HepG2 (cell line): ENCODE measurements at regions of chr4 and their contacts with region 1.

Region 1: DNA sequence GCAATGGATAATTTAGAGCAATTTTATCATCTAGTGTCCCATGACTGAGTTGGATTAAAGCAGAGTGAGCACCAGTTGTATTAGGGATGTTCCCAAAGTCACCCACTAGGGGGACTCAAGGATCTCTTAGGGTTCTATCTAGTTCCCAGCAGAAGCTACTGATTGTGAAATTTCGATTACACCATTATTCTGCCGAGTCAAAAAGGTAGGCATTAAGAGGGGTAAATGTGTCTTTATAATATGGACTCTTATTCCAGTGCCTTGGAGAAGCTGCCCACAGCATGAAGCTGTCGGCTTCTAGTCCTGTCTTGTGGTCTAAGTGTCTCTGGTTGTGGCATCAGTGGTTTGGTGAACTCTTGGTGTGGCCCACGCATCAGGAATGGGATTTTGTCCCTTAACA is 53.3 kb downstream of the RGS12 start:
- DNase-seq: peak; percentile 81
- ATAC-seq: peak; percentile 93
- H3K4me3 ChIP-seq: no peak overlapping the region
- H3K27ac ChIP-seq: no peak overlapping the region
- H3K4me1 ChIP-seq: peaks cover 25% of the 10 kb centered on the region
- H3K27me3 ChIP-seq: no peaks in the 10 kb centered on the region
- CTCF ChIP-seq: peak; percentile 83
- EP300 ChIP-seq: no peak
- POLR2A ChIP-seq: no peak
- RAD21 ChIP-seq: peak; percentile 89

Region 2: DNA sequence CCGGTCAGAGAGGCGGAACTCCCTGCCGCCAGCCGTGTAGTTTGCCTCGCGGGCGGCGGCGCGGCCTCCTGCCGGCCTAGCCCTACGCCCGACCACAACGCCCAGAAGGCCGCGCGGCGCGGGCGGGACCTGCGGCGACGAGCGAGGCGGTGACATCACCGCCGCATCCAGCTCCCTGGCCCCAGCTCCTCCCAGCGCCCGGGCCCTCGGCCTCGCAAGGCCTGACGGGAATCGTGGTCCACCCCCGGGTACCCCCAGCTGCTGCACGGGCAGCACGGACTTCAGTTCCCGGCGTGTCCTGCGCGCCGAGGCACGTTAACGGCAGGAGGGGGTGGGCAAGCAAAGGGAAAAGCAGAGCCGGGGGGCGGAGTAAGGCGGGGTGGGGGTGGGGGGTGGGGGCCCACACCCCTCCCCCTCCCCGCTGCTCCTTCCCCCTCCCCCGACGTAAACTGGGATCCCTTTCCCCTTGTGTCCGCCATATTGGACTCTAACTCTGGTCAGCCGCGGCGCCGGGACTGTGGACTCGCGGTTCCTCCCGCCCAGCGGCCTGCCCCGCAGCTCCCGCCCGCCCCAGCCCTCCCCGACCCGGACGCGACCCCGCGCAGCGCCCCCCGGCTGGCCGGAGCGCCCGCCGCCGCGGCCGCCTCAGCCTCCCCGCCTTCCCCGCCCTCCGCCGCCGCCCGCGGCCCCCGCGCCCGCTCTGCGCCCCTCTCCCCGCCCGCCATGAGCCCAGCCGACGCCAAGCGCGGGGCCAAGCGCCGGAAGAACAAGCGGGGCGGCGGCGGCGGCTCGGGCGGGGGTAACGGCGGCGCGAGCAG is 809.7 kb before region 1 on chr4 and contains the start of gene FAM193A:
- CTCF ChIA-PET with region 1: no interaction called
- POLR2A ChIA-PET with region 1: no interaction called
- in situ Hi-C with region 1: no loop called
- intact Hi-C with region 1: no loop called
- DNase-seq: peak; percentile 96
- ATAC-seq: peak; percentile 90
- H3K4me3 ChIP-seq: peak within 1 kb of the TSS; percentile 89 to 92 (median 91)
- H3K27ac ChIP-seq: peak within 1 kb of the TSS; percentile 86
- H3K4me1 ChIP-seq: peaks cover 20% of the 10 kb centered on the region
- H3K27me3 ChIP-seq: no peaks in the 10 kb centered on the region; a peak in 1 of 5 replicates
- CTCF ChIP-seq: no peak
- EP300 ChIP-seq: peak in 1 of 2 experiments; percentile 47; a peak in 1 of 4 replicates
- POLR2A ChIP-seq: peak; percentile 42 to 68; a peak in 3 of 4 replicates
- RAD21 ChIP-seq: no peak
- total RNA-seq, gene FAM193A: 7.2 and 8.7 TPM in 2 replicates

Region 3: GRCh38 chr4:3408793-3409330 is 62.7 kb after region 1 on chr4:
- CTCF ChIA-PET with region 1: interaction called, 3 read pairs
- POLR2A ChIA-PET with region 1: interaction called, 3 read pairs
- in situ Hi-C with region 1: no loop called
- intact Hi-C with region 1: loop called (anchors 2 kb)
- DNase-seq: no peak
- ATAC-seq: peak; percentile 26
- H3K4me3 ChIP-seq: no peak overlapping the region
- H3K27ac ChIP-seq: peak overlapping the region; percentile 96
- H3K4me1 ChIP-seq: peaks cover 50% of the 10 kb centered on the region
- H3K27me3 ChIP-seq: no peaks in the 10 kb centered on the region
- CTCF ChIP-seq: no peak
- EP300 ChIP-seq: no peak
- POLR2A ChIP-seq: no peak
- RAD21 ChIP-seq: no peak

Region 4: DNA sequence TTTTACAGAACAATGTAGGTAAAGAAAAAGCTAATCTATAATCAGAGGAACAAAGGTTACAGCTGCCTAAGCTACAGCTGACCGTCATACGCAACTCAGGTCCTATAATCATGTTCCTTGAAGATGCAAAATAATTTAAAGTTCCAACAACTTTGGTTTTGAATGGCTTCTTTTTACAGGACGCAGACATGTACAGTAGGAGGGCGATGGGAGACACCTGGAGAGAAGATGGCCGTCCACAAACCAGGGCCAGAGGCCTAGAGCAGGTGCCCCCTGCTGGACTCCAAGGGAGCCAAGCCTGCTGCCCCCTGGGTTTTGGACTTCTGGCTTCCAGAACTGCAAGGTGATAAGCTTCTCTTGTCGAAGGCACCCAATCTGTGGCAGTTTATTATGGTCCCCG is 106.2 kb after region 1 on chr4:
- CTCF ChIA-PET with region 1: interaction called, 9 read pairs
- POLR2A ChIA-PET with region 1: interaction called, 3 read pairs
- in situ Hi-C with region 1: loop called (anchors 5 kb)
- intact Hi-C with region 1: no loop called
- DNase-seq: peak; percentile 74
- ATAC-seq: peak; percentile 94
- H3K4me3 ChIP-seq: peak overlapping the region; percentile 7 to 34 (median 30); a peak in 3 of 6 replicates
- H3K27ac ChIP-seq: no peak overlapping the region
- H3K4me1 ChIP-seq: peaks cover 27% of the 10 kb centered on the region
- H3K27me3 ChIP-seq: peaks cover 0 to 2% of the 10 kb centered on the region in 2 experiments; a peak in 1 of 5 replicates
- CTCF ChIP-seq: peak; percentile 84
- EP300 ChIP-seq: no peak
- POLR2A ChIP-seq: no peak
- RAD21 ChIP-seq: peak; percentile 59

Region 5: GRCh38 chr4:4859390-4859842 is 1513.3 kb after region 1 on chr4 and contains the start of gene MSX1:
- CTCF ChIA-PET with region 1: no interaction called
- POLR2A ChIA-PET with region 1: no interaction called
- in situ Hi-C with region 1: no loop called
- intact Hi-C with region 1: no loop called
- DNase-seq: peak; percentile 81
- ATAC-seq: peak; percentile 94
- H3K4me3 ChIP-seq: peak within 1 kb of the TSS; percentile 86 to 98 (median 97)
- H3K27ac ChIP-seq: peak within 1 kb of the TSS; percentile 78
- H3K4me1 ChIP-seq: peaks cover 13% of the 10 kb centered on the region
- H3K27me3 ChIP-seq: no peaks in the 10 kb centered on the region; a peak in 1 of 5 replicates
- CTCF ChIP-seq: no peak; the same call in 1 of the 2 replicates
- EP300 ChIP-seq: no peak
- POLR2A ChIP-seq: peak; percentile 90 to 96
- RAD21 ChIP-seq: peak; percentile 55; the same call in 1 of the 2 replicates
- total RNA-seq, gene MSX1: 13.8 and 14.9 TPM in 2 replicates